Activated naive CD8-positive, alpha-beta T cell treated with anti-CD3 and anti-CD28 coated beads, Interleukin-2, amount 10 ng/mL, durations not matched to agents 7 days and 5 days (primary cell): ENCODE measurements at regions of chr2 and their contacts with region 1.

Region 1: DNA sequence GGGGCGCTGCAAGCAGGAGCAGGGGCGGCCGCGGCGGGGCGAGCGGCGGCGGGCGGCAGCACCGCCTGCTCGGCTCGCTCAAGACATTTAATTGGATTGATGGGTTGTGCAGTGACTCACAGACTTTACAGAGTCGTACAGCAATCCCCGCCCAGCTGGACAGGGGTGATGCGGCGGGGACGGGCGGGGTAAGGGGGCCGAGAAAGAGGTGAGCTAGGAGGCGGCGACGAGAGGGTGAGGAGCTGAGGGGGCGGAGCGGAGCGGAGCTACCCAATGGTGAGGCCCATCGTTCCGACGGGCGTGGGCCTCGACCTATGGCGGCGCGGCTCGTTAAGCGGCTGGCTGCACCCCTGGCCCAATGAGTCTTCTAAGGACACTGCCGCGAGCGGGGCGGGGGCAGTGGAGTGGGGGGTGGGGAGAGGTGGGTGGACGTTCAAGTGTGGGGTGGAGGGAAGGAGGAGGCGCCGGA is 97.1 kb upstream of the SERTAD2 start:
- DNase-seq: peak; percentile 95
- ATAC-seq: peak; percentile 90
- H3K4me3 Mint-ChIP-seq: peak overlapping the region; percentile 92
- H3K27ac Mint-ChIP-seq: peak overlapping the region; percentile 95
- H3K4me1 Mint-ChIP-seq: peaks cover 16% of the 10 kb centered on the region
- H3K27me3 Mint-ChIP-seq: no peaks in the 10 kb centered on the region

Region 2: GRCh38 chr2:64609227-64609941 is 141.5 kb before region 1 on chr2:
- POLR2A ChIA-PET with region 1: interaction called, 13 read pairs
- DNase-seq: peak; percentile 93
- ATAC-seq: peak; percentile 80
- H3K4me3 Mint-ChIP-seq: peak overlapping the region; percentile 74
- H3K27ac Mint-ChIP-seq: peak overlapping the region; percentile 79
- H3K4me1 Mint-ChIP-seq: peaks cover 20% of the 10 kb centered on the region
- H3K27me3 Mint-ChIP-seq: peaks cover 19% of the 10 kb centered on the region

Region 3: DNA sequence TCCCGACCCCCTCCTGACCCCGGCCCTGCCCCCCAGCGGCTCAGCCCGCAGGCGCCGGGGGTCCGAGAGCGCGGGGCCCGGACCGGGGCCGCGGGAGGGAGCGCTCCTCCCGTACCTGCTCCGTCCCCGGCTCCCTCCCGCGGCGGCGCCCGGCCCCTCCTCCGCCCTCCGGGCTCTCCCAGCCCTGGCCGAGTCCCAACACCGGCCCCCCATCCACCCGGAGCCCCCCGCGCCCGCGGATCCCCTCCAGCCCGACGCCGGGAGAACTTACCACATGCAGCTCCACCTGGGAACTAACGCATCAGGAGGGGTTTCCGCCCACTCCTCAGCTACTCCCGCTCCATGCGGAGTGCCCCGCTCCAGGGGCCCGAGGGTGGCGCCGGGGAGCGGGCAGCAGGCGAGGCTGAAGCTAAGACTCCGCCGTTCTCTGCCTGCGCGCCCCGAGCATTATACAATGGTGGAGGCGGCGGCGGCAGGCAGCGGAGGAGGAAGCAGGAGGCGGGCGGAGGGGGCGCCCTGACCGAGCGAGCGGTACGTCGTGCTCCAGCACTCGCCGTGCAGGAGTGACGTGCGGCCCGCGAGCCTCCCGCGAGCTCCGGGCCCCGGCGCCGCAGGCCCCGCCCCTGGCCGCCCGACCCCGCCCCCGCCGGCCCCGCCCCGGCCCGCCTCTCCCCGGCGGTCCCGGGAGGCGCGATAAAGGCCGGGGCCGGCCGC is 97.3 kb before region 1 on chr2 and contains the start of gene SERTAD2:
- POLR2A ChIA-PET with region 1: interaction called, 137 read pairs
- DNase-seq: peak; percentile 88
- ATAC-seq: peak; percentile 87
- H3K4me3 Mint-ChIP-seq: peak within 1 kb of the TSS; percentile 90
- H3K27ac Mint-ChIP-seq: peak within 1 kb of the TSS; percentile 90
- H3K4me1 Mint-ChIP-seq: peaks cover 57% of the 10 kb centered on the region
- H3K27me3 Mint-ChIP-seq: no peaks in the 10 kb centered on the region
- total RNA-seq, gene SERTAD2: 27.0 to 27.7 TPM

Region 4: DNA sequence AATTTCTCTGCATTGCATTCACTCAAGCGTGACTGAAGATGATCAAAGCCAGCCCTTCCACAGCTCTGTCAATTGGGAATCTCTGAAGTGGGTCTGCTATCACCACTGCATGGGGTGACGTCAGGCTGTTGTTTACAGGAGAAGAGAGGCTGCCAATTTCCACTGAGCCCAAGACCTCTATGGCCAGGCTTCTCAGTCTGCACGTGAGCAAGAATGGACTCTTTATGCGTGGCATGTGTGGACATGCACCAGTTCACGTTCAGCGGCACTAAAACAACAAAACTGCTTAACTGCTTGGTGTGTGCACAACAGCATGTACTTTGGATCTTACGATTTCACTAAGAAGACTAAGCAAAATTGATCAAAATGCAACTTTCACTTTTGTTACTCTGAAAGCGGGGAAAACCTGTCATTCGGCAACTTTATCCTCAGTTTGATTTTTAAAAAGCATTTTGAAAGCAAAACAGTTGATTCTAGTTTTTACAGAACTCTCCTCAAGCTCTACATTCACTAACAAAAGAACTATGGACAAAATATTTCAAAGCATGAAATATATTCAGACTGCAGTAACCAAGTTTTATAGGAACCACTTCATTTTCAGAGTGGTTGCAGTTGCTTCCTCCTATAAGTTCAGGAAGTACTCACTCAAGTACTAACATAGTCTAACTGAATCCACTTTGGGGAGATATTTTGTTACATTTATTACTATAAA is 20.1 kb before region 1 on chr2:
- POLR2A ChIA-PET with region 1: interaction called, 55 read pairs
- DNase-seq: peak; percentile 45
- ATAC-seq: peak; percentile 63
- H3K4me3 Mint-ChIP-seq: peak overlapping the region; percentile 86
- H3K27ac Mint-ChIP-seq: peak overlapping the region; percentile 95
- H3K4me1 Mint-ChIP-seq: peaks cover 56% of the 10 kb centered on the region
- H3K27me3 Mint-ChIP-seq: no peaks in the 10 kb centered on the region

Region 5: DNA sequence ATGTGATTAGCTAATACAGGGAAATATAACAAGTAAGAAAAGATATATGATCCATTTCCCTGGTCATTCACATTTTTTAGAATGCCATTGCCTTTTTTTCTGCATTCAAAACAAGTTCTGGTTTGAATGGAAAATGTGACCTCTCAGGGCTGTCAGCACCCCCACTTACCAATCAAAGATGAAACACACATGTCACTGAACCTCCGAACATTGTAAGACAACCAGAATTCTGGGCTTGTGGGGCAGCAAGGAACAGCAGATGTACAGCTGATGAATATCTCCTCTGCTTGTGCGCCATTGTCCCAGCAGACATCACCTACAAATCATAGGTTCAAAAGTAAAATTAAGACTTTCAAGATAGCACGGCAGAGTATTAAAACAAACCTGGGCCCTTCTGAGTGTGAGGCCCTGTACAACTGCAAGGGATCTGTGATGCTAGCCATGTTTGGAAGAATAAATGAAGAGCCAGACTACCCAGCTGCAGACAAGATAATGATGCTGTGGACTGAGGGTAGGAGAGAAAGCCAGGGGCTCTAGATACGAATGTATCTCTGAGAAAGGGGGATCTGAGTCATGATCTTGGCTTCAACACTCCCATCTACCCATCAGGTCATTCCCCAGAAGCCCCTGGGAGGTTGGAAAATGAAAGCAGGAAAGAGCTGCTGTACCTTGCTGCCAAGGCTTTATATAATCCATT is 11.6 kb after region 1 on chr2:
- POLR2A ChIA-PET with region 1: interaction called, 54 read pairs
- DNase-seq: no peak
- ATAC-seq: no peak
- H3K4me3 Mint-ChIP-seq: no peak overlapping the region
- H3K27ac Mint-ChIP-seq: no peak overlapping the region
- H3K4me1 Mint-ChIP-seq: peaks cover 27% of the 10 kb centered on the region
- H3K27me3 Mint-ChIP-seq: no peaks in the 10 kb centered on the region

Region 6: GRCh38 chr2:64819774-64820696 is 69.2 kb after region 1 on chr2:
- POLR2A ChIA-PET with region 1: interaction called, 15 read pairs
- DNase-seq: peak; percentile 37
- ATAC-seq: peak; percentile 96
- H3K4me3 Mint-ChIP-seq: peak overlapping the region; percentile 63
- H3K27ac Mint-ChIP-seq: peak overlapping the region; percentile 88
- H3K4me1 Mint-ChIP-seq: peaks cover 28% of the 10 kb centered on the region
- H3K27me3 Mint-ChIP-seq: no peaks in the 10 kb centered on the region